ENCODE measurements at regions of chr7 and their contacts with region 1.

Region 1: DNA sequence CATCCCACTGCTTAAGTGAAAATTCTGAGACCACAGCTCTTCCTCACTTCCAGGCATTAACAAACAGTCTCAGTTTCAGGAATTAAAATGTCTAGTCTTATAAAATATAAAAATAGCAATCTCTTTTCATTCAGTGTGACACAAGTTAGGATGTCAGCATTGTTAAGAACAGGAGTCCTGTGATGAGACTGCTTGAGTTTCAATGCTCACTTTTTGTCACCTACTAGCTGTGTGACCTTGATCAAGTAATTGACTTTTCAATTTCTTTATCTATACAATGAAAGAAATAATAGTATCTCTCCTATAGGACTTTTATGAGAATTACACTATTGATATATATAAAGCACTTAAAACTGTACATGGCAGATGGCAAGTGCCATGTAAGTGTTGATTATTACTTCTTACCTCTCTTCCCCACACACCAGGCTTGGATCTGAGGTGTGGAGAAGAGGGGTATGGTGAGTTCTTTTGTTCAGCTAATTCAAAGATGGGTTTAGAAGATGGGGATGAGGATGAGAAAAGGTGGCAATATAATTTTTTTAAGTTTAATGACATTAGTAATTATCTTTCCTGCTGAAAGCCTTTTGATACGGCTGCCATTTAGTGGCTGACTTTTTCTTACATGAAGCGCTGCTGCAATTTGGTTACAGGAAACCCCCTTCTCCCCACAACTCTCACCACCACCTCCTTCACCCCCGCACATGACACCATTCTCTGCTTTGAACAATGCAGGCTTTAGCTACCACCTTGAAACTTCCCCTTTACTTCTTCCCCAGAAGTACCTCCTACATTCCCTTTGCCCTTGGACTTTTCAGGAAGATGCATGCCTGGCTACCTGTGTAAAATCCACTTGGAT is 20.8 kb upstream of the HYAL4 start:
- DNase-seq: no peak
- H3K4me3 Mint-ChIP-seq: peak overlapping the region; percentile 6
- H3K27ac Mint-ChIP-seq: peak overlapping the region; percentile 67
- H3K4me1 Mint-ChIP-seq: peaks cover 16% of the 10 kb centered on the region
- H3K27me3 Mint-ChIP-seq: peaks cover 16% of the 10 kb centered on the region

Region 2: DNA sequence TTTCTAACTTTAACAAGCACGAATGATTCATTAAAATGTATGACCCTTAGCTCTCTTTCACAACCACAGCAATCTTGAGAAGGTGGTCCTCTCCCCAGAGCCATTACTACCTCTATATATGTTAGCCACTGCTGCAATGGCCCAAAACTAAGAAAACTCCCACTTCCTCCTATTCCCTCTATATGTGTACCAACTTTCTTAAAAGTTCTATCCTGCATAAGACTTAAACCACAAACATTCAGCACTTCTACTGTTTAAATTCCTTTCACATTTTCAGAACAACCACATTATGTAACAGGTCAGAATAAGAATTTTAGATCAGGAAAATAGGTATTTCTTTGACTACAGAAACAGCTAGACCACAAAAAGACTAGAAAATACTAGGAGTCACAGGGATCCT is 111.5 kb before region 1 on chr7:
- intact Hi-C with region 1: loop called (anchors 1 kb)
- DNase-seq: no peak
- H3K4me3 Mint-ChIP-seq: no peak overlapping the region
- H3K27ac Mint-ChIP-seq: no peak overlapping the region
- H3K4me1 Mint-ChIP-seq: peaks cover 51% of the 10 kb centered on the region
- H3K27me3 Mint-ChIP-seq: no peaks in the 10 kb centered on the region

Region 3: DNA sequence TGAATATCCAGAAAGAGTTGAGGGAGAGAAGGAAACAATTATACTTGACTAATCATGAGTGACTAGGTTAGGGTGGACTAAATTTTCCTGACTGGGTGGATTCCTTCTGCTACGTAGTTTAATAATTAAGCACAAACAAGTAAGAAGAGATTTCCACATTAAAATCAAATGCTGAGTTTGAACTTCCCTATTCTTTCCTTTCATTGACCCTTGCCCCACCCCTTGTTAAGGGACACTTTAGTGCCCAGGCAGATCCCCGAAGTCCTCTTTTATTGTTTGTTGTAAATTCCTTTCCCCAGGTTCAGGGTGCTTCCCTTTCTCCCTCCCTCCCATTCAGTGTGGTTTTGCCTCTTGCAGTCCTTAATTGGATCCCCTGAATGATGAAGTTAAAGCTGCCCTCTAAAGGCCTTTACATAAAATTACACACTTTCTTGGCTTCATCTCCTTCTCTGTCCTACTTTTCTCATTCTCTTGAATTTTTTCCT is 92.2 kb after region 1 on chr7:
- intact Hi-C with region 1: no loop called
- DNase-seq: no peak
- H3K4me3 Mint-ChIP-seq: no peak overlapping the region
- H3K27ac Mint-ChIP-seq: no peak overlapping the region
- H3K4me1 Mint-ChIP-seq: no peaks in the 10 kb centered on the region
- H3K27me3 Mint-ChIP-seq: no peaks in the 10 kb centered on the region

Region 4: DNA sequence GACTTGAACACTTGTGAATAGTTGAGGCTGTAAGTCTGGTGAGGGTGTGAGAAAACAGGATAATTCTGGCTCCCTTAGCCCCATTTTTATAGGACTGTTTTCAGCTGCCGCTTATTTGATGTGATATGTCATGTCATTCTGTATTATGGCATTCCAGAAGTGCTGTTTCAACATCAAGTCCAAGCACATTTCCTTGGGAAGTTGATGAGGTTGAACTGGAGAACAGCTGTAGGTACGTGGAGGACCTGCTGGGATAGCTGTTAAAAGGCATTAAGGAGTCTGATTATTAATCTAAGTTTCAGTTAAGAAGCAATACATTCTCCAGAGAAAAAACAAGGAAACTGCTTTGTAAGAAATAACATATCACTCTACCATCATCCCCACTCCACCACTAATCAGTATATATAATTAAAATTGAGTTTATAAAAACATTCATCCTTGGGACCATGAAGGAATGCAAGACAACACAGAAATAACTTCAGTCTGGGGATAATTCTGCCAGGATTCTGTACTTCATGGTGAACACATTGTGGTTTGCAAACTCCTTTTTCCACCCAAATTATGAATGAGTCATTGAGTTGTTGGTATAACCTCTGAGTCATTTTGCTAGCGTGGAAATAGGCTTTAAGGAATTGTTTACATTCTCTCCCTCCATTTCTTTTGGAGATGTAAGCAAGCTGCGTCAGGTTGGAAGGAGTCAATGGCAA is 248.6 kb after region 1 on chr7:
- intact Hi-C with region 1: no loop called
- DNase-seq: no peak
- H3K4me3 Mint-ChIP-seq: no peak overlapping the region
- H3K27ac Mint-ChIP-seq: no peak overlapping the region
- H3K4me1 Mint-ChIP-seq: no peaks in the 10 kb centered on the region
- H3K27me3 Mint-ChIP-seq: no peaks in the 10 kb centered on the region

Measured in activated T-helper 2 cell treated with anti-CD3 and anti-CD28 coated beads, Interferon-gamma antibody, Interleukin-2, Interleukin-4, amounts not matched to agents 10 μg/mL and 5 μg/mL and 100 μg/mL, durations not matched to agents 14 hours and 24 hours and 36 hours (primary cell).